ENCODE measurements at regions of chr2 and their contacts with region 1.

Region 1: DNA sequence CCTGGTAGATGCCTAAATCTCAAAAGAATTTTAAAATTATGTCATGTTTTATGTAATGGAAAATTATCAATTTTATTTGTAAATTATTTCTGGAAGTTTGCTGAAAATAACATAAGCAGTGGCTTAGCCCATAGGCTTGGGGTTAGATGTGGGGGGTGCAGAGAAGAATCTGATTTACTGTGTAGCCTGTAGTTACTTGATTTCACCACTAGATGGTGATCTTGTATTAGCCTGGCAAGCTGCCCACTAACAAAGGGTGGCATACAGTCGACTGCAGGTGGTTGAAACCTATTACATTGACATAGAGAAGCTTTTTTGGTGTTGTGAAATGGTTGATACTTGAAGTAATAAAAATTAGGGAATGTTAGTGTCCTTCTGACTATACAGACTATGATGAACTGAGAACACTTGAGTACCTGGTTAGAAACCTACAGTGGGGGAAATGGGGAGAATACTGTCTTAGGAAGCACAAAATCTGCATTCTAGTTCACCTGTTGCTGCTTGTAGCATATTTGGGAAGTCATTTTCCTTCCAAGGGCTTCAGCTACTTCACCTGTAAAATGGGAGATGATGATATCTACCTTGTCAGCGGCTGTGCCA is 191.0 kb upstream of the LHCGR start:
- DNase-seq: peak; percentile 41 to 53
- ATAC-seq: peak; percentile 91 to 96
- H3K4me3 ChIP-seq: no peak overlapping the region
- H3K27ac ChIP-seq: no peak overlapping the region
- H3K4me1 ChIP-seq: no peaks in the 10 kb centered on the region
- CTCF ChIP-seq: peak; percentile 91
- EP300 ChIP-seq: no peak
- POLR2A ChIP-seq: no peak
- RAD21 ChIP-seq: peak; percentile 90 to 93

Region 2: GRCh38 chr2:48607307-48608014 is 339.1 kb before region 1 on chr2:
- CTCF ChIA-PET with region 1: no interaction called
- POLR2A ChIA-PET with region 1: no interaction called
- DNase-seq: no peak
- ATAC-seq: no peak
- H3K4me3 ChIP-seq: no peak overlapping the region
- H3K27ac ChIP-seq: no peak overlapping the region
- H3K4me1 ChIP-seq: no peaks in the 10 kb centered on the region
- CTCF ChIP-seq: no peak
- EP300 ChIP-seq: no peak
- POLR2A ChIP-seq: no peak
- RAD21 ChIP-seq: no peak

Region 3: DNA sequence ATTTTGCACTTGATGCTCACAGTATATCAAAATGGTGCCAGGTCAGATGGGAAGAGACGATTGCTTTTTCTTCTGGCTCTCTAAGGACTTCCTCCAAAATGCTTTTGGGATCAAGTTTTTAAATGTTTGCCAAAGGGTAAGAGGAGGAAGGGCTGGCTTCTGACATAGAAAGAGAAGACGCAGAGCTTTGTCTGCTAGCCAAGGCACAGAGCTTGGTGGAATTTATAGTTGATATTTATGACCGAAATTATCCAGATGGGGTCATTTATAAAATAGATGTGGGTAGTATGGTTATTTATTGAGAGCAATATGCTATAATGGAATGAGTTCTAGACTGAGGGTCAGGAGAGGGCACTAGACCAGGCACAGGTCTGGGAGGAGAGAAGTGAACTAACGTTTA is 14.5 kb after region 1 on chr2:
- CTCF ChIA-PET with region 1: interaction called, 11 read pairs
- POLR2A ChIA-PET with region 1: no interaction called
- DNase-seq: no peak
- ATAC-seq: no peak
- H3K4me3 ChIP-seq: no peak overlapping the region
- H3K27ac ChIP-seq: no peak overlapping the region
- H3K4me1 ChIP-seq: no peaks in the 10 kb centered on the region
- CTCF ChIP-seq: no peak
- EP300 ChIP-seq: no peak
- POLR2A ChIP-seq: no peak
- RAD21 ChIP-seq: no peak

Region 4: GRCh38 chr2:50143822-50144575 is 1197.5 kb after region 1 on chr2:
- CTCF ChIA-PET with region 1: interaction called, 11 read pairs
- POLR2A ChIA-PET with region 1: no interaction called
- DNase-seq: peak; percentile 15 to 57
- ATAC-seq: peak; percentile 95 to 99
- H3K4me3 ChIP-seq: peak overlapping the region; percentile 42
- H3K27ac ChIP-seq: peak overlapping the region; percentile 44 to 59; a peak in 3 of 6 replicates
- H3K4me1 ChIP-seq: no peaks in the 10 kb centered on the region
- CTCF ChIP-seq: peak; percentile 81
- EP300 ChIP-seq: no peak
- POLR2A ChIP-seq: no peak
- RAD21 ChIP-seq: peak; percentile 72 to 75

Region 5: GRCh38 chr2:50401772-50402653 is 1455.5 kb after region 1 on chr2:
- CTCF ChIA-PET with region 1: interaction called, 14 read pairs
- POLR2A ChIA-PET with region 1: no interaction called
- DNase-seq: peak; percentile 8 to 73
- ATAC-seq: peak; percentile 62 to 83; a peak in 3 of 6 replicates
- H3K4me3 ChIP-seq: no peak overlapping the region
- H3K27ac ChIP-seq: no peak overlapping the region
- H3K4me1 ChIP-seq: no peaks in the 10 kb centered on the region
- CTCF ChIP-seq: peak; percentile 81
- EP300 ChIP-seq: no peak
- POLR2A ChIP-seq: no peak
- RAD21 ChIP-seq: peak; percentile 82 to 90

Measured in A549 (cell line).